Activated CD4-positive, alpha-beta T cell treated with anti-CD3 and anti-CD28 coated beads for 36 hours (primary cell): ENCODE measurements at regions of chr3 and their contacts with region 1.

Region 1: DNA sequence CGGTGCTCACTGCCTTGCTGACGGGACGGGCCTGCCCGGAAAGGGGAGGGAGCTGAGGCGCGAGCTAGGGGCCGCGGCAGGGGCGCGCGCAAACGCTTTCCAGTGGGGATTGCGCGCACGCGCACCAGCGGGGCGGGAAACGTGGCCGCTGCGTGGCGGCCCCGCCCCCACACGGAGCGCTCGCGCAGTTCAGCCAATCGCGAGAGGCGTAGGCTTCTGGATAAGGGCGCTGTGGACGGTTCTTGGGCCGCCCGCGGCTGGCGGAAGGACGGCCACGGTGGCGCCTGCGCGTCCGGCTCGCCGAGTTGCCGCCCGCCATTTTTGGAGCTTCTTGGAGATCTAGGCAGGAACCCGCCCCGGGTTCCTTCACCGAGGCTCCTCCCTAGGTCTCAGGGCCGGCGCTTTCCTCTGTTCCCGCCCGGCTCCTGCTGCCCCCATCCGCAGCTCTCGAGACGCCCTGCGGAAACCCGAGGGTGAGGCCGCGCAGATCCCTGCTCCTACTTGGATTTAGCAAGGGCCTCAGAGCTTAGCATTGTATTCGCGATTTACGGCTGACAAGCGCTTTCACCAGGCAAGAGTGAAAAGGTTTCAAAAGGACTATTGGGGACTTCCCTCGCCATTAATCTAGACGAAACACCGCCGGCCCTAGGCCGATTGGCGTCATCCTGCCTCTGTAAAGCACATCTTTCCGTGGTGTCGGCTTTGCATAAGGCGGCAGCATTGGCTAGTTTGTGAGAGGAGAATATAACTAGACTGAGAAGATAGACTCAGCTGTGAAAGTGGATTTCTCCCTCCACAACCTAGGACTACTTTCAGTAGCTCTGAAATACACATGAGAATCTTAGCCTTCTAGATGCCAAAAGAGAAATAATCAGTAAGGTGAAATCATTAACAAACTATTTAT is 496 bp upstream of the STAG1 start:
- DNase-seq: peak; percentile 99
- ATAC-seq: peak; percentile 87
- H3K4me3 Mint-ChIP-seq: peak overlapping the region; percentile 86
- H3K27ac Mint-ChIP-seq: peak overlapping the region; percentile 98
- H3K4me1 Mint-ChIP-seq: peaks cover 35% of the 10 kb centered on the region
- H3K27me3 Mint-ChIP-seq: no peaks in the 10 kb centered on the region

Region 2: GRCh38 chr3:135965506-135966270 is 787.0 kb before region 1 on chr3 and contains the start of gene PPP2R3A:
- CTCF ChIA-PET with region 1: no interaction called
- POLR2A ChIA-PET with region 1: no interaction called
- intact Hi-C with region 1: loop called in 1 of 2 experiments (anchors 2 kb)
- DNase-seq: peak; percentile 85
- ATAC-seq: peak; percentile 93
- H3K4me3 Mint-ChIP-seq: peak within 1 kb of the TSS; percentile 65
- H3K27ac Mint-ChIP-seq: no peak within 1 kb of the TSS
- H3K4me1 Mint-ChIP-seq: peaks cover 11% of the 10 kb centered on the region
- H3K27me3 Mint-ChIP-seq: peaks cover 30% of the 10 kb centered on the region
- total RNA-seq, gene PPP2R3A: 0.18 to 0.51 TPM

Region 3: GRCh38 chr3:136239094-136239493 is 513.6 kb before region 1 on chr3:
- CTCF ChIA-PET with region 1: no interaction called
- POLR2A ChIA-PET with region 1: no interaction called
- intact Hi-C with region 1: no loop called
- DNase-seq: no peak
- ATAC-seq: no peak
- H3K4me3 Mint-ChIP-seq: no peak overlapping the region
- H3K27ac Mint-ChIP-seq: no peak overlapping the region
- H3K4me1 Mint-ChIP-seq: no peaks in the 10 kb centered on the region
- H3K27me3 Mint-ChIP-seq: peaks cover 2% of the 10 kb centered on the region

Region 4: GRCh38 chr3:136250226-136250902 is 502.3 kb before region 1 on chr3 and contains the start of gene PCCB:
- CTCF ChIA-PET with region 1: interaction called, 4 read pairs
- POLR2A ChIA-PET with region 1: interaction called, 5 read pairs
- intact Hi-C with region 1: loop called (anchors 1 to 2 kb)
- DNase-seq: peak; percentile 96
- ATAC-seq: peak; percentile 99
- H3K4me3 Mint-ChIP-seq: peak within 1 kb of the TSS; percentile 83
- H3K27ac Mint-ChIP-seq: peak within 1 kb of the TSS; percentile 91
- H3K4me1 Mint-ChIP-seq: peaks cover 15% of the 10 kb centered on the region
- H3K27me3 Mint-ChIP-seq: no peaks in the 10 kb centered on the region
- total RNA-seq, gene PCCB: 45.3 to 51.8 TPM

Region 5: DNA sequence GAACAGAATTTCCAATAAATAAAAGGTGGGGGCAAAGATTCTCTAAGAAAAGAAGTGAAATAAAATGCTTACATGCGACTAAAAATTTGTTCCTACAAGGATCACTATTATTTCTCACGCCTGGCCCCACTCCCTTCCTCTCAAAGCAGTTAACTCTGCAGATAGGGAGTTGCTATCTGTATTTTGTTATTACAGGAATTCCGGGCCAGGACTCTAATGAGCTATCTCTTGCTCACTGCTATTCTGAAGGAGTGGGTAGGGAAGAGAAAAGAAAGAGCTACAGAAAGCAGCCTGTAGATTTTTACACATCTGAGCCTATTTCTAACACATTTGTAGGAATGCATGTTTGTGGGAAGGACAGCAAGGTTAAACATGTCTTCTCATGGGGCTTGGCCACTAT is 362.1 kb before region 1 on chr3:
- CTCF ChIA-PET with region 1: interaction called, 7 read pairs
- POLR2A ChIA-PET with region 1: no interaction called
- intact Hi-C with region 1: loop called (anchors 1 to 2 kb)
- DNase-seq: no peak
- ATAC-seq: no peak
- H3K4me3 Mint-ChIP-seq: no peak overlapping the region
- H3K27ac Mint-ChIP-seq: no peak overlapping the region
- H3K4me1 Mint-ChIP-seq: no peaks in the 10 kb centered on the region
- H3K27me3 Mint-ChIP-seq: no peaks in the 10 kb centered on the region

Region 6: GRCh38 chr3:136741063-136741462 is 11.6 kb before region 1 on chr3:
- CTCF ChIA-PET with region 1: interaction called, 14 read pairs
- POLR2A ChIA-PET with region 1: interaction called, 5 read pairs
- intact Hi-C with region 1: no loop called
- DNase-seq: no peak
- ATAC-seq: no peak
- H3K4me3 Mint-ChIP-seq: no peak overlapping the region
- H3K27ac Mint-ChIP-seq: no peak overlapping the region
- H3K4me1 Mint-ChIP-seq: peaks cover 40% of the 10 kb centered on the region
- H3K27me3 Mint-ChIP-seq: no peaks in the 10 kb centered on the region

Region 7: GRCh38 chr3:136852180-136852579 is 99.5 kb after region 1 on chr3:
- CTCF ChIA-PET with region 1: no interaction called
- POLR2A ChIA-PET with region 1: no interaction called
- intact Hi-C with region 1: no loop called
- DNase-seq: no peak
- ATAC-seq: no peak
- H3K4me3 Mint-ChIP-seq: no peak overlapping the region
- H3K27ac Mint-ChIP-seq: no peak overlapping the region
- H3K4me1 Mint-ChIP-seq: peaks cover 4% of the 10 kb centered on the region
- H3K27me3 Mint-ChIP-seq: no peaks in the 10 kb centered on the region

Region 8: DNA sequence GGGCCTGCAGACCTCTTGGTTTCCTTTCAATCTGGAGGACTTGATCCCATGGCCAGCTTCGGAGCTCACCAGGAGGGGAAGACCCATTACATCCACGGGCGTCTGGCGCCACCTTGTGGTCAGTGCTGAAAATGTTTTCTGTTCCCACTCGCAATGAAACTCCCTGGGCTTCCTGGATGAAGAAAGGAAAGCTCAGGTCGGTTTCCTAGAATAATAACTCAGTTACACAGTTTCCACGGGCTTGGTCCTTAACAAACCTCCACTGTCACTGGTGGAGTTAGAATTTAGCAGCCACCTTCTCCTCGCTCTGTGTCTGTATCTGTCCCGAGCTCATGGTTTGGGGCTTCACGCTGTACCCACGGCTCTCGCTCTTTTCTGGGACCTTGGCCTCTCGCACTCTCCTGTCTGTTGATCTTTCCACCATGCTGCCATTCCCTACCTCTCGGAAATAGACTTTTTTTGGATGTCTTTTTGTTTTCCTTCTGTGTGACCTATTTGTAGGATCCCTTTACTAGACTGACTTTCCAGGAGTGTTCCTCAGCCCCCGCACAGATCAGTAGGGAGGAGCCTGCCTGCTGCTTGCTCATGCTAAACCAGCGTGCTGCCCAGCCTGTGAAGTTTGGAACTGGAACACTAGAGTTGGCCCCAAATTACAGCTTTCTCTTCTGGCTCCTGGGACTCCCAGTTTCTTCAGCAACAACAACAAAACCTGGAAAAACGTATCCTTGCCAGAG is 261.4 kb after region 1 on chr3:
- CTCF ChIA-PET with region 1: interaction called, 45 read pairs
- POLR2A ChIA-PET with region 1: interaction called, 11 read pairs
- intact Hi-C with region 1: loop called (anchors 1 kb)
- DNase-seq: peak; percentile 90
- ATAC-seq: peak; percentile 89
- H3K4me3 Mint-ChIP-seq: peak overlapping the region; percentile 67
- H3K27ac Mint-ChIP-seq: peak overlapping the region; percentile 57
- H3K4me1 Mint-ChIP-seq: peaks cover 7% of the 10 kb centered on the region
- H3K27me3 Mint-ChIP-seq: no peaks in the 10 kb centered on the region